ENCODE measurements at regions of chr5 and their contacts with region 1.

Region 1: DNA sequence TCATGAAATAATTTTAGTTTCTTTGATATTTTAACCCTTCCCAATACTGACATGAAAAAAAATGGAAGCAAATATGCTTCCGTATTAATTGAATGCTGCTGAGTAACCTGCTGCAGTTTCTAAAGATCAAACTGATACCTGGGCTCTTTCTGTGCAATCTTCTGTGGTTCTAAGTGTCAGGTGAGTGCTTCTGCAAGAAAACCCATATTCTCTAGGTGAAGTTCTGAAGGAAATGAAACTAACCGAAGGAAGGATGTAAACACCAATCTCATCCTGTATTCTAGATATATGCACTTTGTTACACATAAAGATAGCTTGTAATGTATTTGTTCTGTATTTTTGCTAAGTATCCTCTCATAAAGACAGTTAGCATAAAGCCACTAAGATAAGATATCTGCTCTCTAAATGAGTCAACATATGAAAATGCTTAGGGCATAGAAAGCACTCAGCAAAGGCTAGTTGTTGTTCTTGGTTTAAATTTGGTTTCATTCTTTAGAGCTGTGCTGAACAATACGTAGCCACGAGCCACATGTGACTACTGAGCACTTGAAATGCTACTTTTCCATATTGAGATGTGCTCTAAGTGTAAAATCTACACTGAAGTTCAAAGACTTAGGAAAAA is 52.0 kb downstream of the ITGA2 start:
- DNase-seq: peak; percentile 26
- H3K4me3 ChIP-seq: peak overlapping the region in 1 of 3 experiments; percentile 12
- H3K27ac ChIP-seq: no peak overlapping the region
- H3K4me1 ChIP-seq: peaks cover 51% of the 10 kb centered on the region
- H3K27me3 ChIP-seq: no peaks in the 10 kb centered on the region
- CTCF ChIP-seq: no peak
- POLR2A ChIP-seq: no peak

Region 2: DNA sequence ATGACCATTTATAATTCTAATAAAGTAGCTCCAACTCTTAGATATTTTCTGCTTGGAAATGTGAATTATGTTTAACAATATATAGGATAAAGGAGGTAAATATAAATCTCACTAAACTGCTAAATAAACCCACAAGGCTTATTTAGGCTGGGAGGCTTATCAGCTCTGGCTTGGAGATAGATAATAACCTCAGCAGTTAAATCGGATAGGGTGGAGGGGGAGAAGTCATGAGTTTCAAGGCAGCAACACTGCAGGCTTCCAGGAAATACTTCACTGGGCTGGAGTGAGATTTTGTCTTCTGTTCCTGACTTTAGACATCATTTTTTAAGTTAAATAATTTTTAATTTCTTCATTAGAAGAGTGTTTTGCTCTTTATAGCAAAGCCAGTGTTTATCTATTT is 132.0 kb before region 1 on chr5:
- CTCF ChIA-PET with region 1: no interaction called
- POLR2A ChIA-PET with region 1: no interaction called
- dilution Hi-C with region 1: no loop called
- intact Hi-C with region 1: no loop called
- DNase-seq: no peak
- H3K4me3 ChIP-seq: no peak overlapping the region
- H3K27ac ChIP-seq: no peak overlapping the region
- H3K4me1 ChIP-seq: no peaks in the 10 kb centered on the region
- H3K27me3 ChIP-seq: no peaks in the 10 kb centered on the region
- CTCF ChIP-seq: no peak
- POLR2A ChIP-seq: no peak

Region 3: DNA sequence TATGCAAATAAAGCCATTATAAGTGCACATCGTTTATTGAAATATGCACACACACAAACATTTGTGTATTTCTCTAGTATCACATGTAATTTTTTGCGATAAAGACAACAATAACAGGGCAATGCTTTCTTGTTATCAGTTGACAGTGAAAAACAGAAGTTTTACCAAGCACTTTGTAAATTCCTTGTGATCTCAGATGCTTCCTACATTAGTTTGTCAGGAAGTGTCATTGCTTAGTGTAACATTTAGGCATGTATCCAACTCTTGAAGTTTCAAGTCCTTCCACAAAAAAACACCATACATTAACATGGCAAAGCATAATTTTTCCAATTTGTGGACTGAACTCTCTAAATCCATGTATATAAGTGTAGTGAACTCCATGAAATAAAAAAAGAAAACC is 22.0 kb after region 1 on chr5:
- CTCF ChIA-PET with region 1: interaction called, 8 read pairs
- POLR2A ChIA-PET with region 1: no interaction called
- dilution Hi-C with region 1: no loop called
- intact Hi-C with region 1: loop called (anchors 1 kb)
- DNase-seq: peak; percentile 88
- H3K4me3 ChIP-seq: peak overlapping the region in 1 of 3 experiments; percentile 21
- H3K27ac ChIP-seq: peak overlapping the region; percentile 71
- H3K4me1 ChIP-seq: peaks cover 26% of the 10 kb centered on the region
- H3K27me3 ChIP-seq: no peaks in the 10 kb centered on the region
- CTCF ChIP-seq: no peak
- POLR2A ChIP-seq: no peak

Region 4: DNA sequence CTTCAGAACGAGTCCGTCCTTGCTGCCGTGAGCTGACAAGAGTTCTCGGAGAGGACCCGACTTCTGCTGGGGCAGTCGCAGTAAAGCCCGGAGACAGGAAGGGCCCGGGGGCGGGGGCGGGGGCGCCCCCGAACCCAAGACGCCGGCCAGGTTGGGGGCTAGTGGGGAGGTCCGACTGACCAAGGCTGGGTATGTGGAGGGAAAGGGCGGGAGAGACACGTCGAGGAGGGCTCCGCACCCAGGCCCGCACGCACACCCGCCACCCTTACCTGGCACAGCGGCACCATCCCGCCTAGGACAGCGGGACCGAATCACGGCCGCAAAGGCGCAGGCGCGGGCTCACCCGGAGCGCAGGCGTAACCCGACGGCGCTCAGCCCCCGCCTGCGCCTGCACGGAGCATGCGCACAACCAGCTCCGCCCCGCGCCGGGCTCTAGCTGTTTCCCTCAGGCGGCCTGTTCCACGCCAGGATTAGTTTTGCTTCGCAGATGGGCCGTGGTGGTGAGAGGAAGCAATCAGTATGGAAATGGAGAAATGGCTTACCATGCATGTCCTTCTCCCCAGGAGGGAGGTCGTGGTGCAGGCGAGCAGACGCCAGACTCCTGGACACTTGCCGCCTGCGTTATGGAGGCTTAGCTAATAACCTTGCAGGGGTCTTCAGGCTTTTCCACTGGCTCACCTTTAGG is 68.4 kb after region 1 on chr5 and contains the start of gene MOCS2:
- CTCF ChIA-PET with region 1: no interaction called
- POLR2A ChIA-PET with region 1: no interaction called
- dilution Hi-C with region 1: no loop called
- intact Hi-C with region 1: no loop called
- DNase-seq: peak; percentile 94
- H3K4me3 ChIP-seq: peak within 1 kb of the TSS; percentile 67 to 88 (median 71)
- H3K27ac ChIP-seq: no peak within 1 kb of the TSS
- H3K4me1 ChIP-seq: peaks cover 16% of the 10 kb centered on the region
- H3K27me3 ChIP-seq: no peaks in the 10 kb centered on the region
- CTCF ChIP-seq: no peak
- POLR2A ChIP-seq: peak; percentile 96
- total RNA-seq, gene MOCS2: 31.1 and 31.5 TPM in 2 replicates

Measured in endothelial cell of umbilical vein (primary cell).